ENCODE measurements at regions of chr1 and their contacts with region 1.

Region 1: GRCh38 chr1:11645670-11646265 is 8.5 kb downstream of the FBXO2 start:
- DNase-seq: peak; percentile 64
- H3K4me3 ChIP-seq: no peak overlapping the region
- H3K27ac ChIP-seq: no peak overlapping the region
- H3K4me1 ChIP-seq: no peaks in the 10 kb centered on the region
- H3K27me3 ChIP-seq: no peaks in the 10 kb centered on the region
- CTCF ChIP-seq: peak; percentile 72 to 84
- POLR2A ChIP-seq: no peak

Region 2: DNA sequence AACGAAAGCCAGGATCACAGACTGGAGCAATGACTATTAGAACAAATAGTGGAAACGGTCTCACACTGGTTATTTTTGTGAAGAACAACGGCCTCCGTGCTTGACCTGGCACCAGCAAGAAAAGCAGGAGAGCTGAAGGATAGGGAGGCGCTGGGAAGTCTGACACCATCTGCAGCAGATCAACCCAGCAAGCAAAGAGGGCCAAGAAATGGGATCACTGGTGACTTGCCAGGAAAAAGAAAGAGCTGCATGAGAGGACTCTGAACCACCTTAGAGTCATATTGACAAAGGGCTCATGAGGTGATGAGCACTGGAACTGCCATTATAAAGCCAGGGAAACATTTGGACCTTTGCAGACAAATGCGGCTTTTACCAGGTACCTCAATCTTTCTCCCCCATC is 408.4 kb before region 1 on chr1:
- CTCF ChIA-PET with region 1: interaction called, 128 read pairs
- POLR2A ChIA-PET with region 1: no interaction called
- dilution Hi-C with region 1: no loop called
- intact Hi-C with region 1: loop called (anchors 1 kb)
- DNase-seq: no peak
- H3K4me3 ChIP-seq: no peak overlapping the region
- H3K27ac ChIP-seq: peak overlapping the region; percentile 66
- H3K4me1 ChIP-seq: peaks cover 14% of the 10 kb centered on the region
- H3K27me3 ChIP-seq: no peaks in the 10 kb centered on the region
- CTCF ChIP-seq: no peak
- POLR2A ChIP-seq: no peak

Region 3: DNA sequence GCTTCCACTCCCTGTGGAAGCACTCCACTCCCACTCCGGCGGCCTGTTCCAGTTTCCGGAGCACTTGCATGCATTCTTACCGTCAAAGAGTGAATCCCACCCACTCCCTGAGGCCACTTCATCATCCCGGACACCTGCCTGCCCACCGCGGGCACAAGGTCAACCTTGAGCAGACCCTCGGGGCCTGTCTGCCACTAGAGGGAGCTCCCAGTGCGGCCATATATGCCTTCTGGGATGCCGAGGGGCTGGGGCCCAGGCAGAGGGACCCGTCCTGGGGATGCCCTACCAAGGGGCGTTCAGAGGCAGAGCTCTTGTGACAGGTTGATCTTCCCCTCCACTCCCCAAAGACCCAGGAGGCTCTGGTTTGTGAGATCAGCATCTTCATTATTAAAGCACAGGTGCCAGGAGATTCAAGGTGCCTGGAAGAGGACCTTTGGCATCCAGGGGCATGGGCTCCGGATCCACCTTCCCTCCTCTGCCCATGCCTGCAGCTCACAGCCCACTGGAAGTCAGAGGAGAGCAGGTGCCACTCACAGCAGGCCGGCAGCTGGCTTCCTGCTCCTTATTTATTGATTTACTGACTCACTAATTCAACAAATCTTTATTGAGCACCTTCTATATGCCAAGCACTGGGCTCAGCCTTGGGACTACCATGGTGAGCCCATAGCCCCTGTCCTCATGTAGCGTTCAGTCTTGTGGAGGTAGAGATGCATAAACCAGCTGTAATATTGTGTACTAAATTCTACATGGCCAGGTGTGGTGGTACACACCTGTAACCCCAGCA is 325.4 kb before region 1 on chr1:
- CTCF ChIA-PET with region 1: interaction called, 10 read pairs
- POLR2A ChIA-PET with region 1: no interaction called
- dilution Hi-C with region 1: no loop called
- intact Hi-C with region 1: loop called (anchors 1 kb)
- DNase-seq: no peak
- H3K4me3 ChIP-seq: no peak overlapping the region
- H3K27ac ChIP-seq: no peak overlapping the region
- H3K4me1 ChIP-seq: no peaks in the 10 kb centered on the region
- H3K27me3 ChIP-seq: peaks cover 0 to 2% of the 10 kb centered on the region in 2 experiments
- CTCF ChIP-seq: peak; percentile 51 to 74
- POLR2A ChIP-seq: no peak

Region 4: DNA sequence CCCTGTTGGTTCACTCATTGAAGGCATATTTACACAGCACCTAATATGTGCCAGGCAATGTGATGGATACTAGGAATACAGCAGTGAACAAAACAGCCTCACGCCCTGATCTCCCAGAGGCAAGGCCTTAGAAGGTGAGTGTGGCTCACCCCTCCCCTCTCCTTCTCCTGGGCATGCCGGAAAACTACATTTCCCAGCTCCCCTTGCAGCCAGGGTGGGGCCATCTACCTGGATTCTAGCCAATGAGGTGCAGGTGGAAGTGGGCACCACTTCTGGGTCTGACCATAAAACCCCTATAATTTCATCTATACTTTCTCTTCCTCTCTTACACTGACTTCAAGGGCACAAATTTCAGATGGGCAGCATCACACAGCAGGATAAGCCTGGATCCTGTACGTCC is 55.4 kb before region 1 on chr1:
- CTCF ChIA-PET with region 1: no interaction called
- POLR2A ChIA-PET with region 1: no interaction called
- dilution Hi-C with region 1: no loop called
- intact Hi-C with region 1: no loop called
- DNase-seq: no peak
- H3K4me3 ChIP-seq: no peak overlapping the region
- H3K27ac ChIP-seq: no peak overlapping the region
- H3K4me1 ChIP-seq: no peaks in the 10 kb centered on the region
- H3K27me3 ChIP-seq: peaks cover 0 to 4% of the 10 kb centered on the region in 2 experiments
- CTCF ChIP-seq: no peak
- POLR2A ChIP-seq: no peak

Region 5: DNA sequence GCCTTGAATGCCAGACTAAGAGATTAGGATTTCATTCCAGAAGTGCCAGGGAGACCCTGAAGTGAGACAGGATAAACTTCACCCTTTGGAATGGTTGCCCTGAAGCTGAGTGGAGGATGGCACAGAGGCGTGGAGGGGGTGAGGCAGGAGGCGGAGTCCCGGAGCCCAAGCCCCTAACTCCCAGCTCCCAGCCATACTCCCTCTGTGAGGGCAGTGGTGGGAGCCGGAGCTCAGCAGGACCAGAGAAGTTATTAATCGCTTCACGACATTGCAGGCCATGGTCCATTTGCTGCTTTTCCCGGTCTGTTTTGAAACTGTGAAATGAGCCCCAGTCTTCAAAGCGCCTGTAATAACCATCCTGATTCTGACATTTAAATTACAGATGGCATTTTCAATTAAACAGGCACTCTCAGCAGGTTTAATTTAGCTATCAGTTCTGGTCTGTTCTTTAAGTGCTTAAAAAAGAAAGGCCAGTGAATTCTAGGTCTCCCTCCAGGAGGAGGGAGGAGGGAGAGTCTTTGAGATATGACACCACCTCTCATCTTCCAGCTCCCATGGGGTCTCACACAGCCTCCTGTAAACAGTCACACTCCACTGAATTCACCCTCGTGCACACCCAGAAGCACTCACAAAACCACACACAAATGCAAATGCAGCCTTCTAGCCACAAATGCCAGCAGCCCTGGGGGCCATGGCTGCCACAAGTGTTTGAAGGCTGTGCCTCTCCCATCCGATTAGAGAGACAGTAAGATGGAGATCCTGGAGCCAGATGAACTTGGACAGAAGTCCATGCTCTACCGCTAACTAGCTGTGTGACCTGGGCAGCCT is 11.2 kb before region 1 on chr1:
- CTCF ChIA-PET with region 1: interaction called, 16 read pairs
- POLR2A ChIA-PET with region 1: no interaction called
- dilution Hi-C with region 1: no loop called
- intact Hi-C with region 1: no loop called
- DNase-seq: no peak
- H3K4me3 ChIP-seq: no peak overlapping the region
- H3K27ac ChIP-seq: no peak overlapping the region
- H3K4me1 ChIP-seq: no peaks in the 10 kb centered on the region
- H3K27me3 ChIP-seq: no peaks in the 10 kb centered on the region
- CTCF ChIP-seq: no peak
- POLR2A ChIP-seq: no peak

Region 6: DNA sequence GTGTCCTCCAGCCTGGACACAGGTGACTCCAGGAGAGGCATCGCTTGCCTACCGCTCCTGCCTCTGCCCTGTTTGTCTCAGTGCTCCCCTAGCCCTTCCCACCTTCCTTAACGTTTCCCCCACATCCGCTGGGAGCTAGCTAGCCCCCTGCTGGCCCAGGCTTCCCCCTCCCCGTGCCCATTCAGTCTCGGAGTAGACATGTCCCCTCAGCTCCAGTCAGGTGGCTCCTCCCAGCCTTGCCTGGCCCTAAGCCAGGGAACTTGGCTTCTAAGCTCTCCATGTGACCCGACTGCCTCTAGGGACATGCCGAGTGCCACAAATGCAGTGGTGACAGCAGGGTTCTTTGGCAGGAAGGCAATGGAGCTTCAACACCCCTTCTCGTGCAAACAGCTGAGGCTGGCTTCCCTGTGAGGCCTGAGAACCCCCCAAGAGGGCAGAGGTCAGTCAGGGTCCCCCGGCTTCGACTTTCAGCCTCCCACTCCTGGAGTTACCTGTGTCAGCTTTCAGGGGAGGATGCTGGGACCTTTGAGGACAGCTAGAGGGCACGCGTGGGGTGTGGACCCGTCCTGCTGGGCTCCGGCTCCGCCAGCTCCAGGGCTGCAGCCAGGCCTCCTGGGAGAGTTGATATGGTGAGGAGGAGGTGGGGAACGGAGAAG is 62.0 kb after region 1 on chr1:
- CTCF ChIA-PET with region 1: interaction called, 42 read pairs
- POLR2A ChIA-PET with region 1: interaction called, 3 read pairs
- dilution Hi-C with region 1: no loop called
- intact Hi-C with region 1: loop called (anchors 1 kb)
- DNase-seq: no peak
- H3K4me3 ChIP-seq: no peak overlapping the region
- H3K27ac ChIP-seq: no peak overlapping the region
- H3K4me1 ChIP-seq: no peaks in the 10 kb centered on the region
- H3K27me3 ChIP-seq: peaks cover 4 to 16% of the 10 kb centered on the region in 2 experiments
- CTCF ChIP-seq: no peak
- POLR2A ChIP-seq: no peak

Region 7: DNA sequence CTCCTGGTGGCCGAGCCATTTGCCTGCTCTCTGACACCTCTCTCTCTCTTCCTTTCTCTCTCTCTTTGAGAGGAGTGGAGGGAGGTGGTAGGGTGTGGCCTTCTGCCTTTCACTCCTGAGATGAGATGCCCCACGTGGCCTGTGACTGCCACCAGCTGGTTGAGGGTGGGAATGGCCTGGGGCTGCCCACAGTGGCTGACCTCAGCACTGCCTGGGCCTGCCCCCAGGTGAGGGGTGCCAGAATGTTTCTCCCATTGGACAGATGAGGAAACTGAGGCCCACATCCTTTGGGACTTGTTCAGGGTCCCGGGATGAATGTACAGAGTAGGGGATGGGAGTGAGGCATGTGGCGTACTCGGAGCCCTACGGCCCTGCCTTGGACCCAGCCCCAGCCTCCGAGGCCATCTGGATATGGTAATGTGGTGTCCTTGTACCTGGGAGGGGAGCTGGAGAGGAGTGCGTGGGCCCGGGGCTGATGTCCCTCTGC is 103.5 kb after region 1 on chr1:
- CTCF ChIA-PET with region 1: interaction called, 4 read pairs
- POLR2A ChIA-PET with region 1: no interaction called
- dilution Hi-C with region 1: no loop called
- intact Hi-C with region 1: loop called (anchors 1 kb)
- DNase-seq: peak; percentile 17
- H3K4me3 ChIP-seq: no peak overlapping the region
- H3K27ac ChIP-seq: no peak overlapping the region
- H3K4me1 ChIP-seq: no peaks in the 10 kb centered on the region
- H3K27me3 ChIP-seq: no peaks in the 10 kb centered on the region
- CTCF ChIP-seq: peak; percentile 52 to 56
- POLR2A ChIP-seq: no peak

Region 8: DNA sequence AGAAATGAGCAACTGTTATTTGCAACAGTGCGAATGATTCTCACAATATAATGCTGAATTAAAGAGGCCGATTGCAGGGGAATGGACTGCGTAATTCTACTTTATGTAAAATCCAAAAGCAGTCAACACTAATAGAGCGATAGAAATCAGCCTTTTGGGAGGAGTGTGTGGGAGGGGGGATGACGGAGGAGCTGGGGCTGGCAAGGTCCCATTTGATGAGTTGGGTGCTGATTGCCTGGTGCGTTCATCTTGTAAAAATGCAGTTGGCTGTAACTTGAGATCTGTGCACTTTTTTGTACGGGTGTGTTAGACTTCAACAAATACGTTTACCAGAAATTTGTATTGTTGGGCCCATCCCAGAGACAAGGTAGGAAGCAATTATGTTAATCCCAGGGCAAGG is 438.0 kb after region 1 on chr1:
- CTCF ChIA-PET with region 1: no interaction called
- POLR2A ChIA-PET with region 1: no interaction called
- dilution Hi-C with region 1: no loop called
- intact Hi-C with region 1: no loop called
- DNase-seq: no peak
- H3K4me3 ChIP-seq: no peak overlapping the region
- H3K27ac ChIP-seq: no peak overlapping the region
- H3K4me1 ChIP-seq: no peaks in the 10 kb centered on the region
- H3K27me3 ChIP-seq: peaks cover 0 to 2% of the 10 kb centered on the region in 2 experiments
- CTCF ChIP-seq: no peak
- POLR2A ChIP-seq: no peak

Region 9: DNA sequence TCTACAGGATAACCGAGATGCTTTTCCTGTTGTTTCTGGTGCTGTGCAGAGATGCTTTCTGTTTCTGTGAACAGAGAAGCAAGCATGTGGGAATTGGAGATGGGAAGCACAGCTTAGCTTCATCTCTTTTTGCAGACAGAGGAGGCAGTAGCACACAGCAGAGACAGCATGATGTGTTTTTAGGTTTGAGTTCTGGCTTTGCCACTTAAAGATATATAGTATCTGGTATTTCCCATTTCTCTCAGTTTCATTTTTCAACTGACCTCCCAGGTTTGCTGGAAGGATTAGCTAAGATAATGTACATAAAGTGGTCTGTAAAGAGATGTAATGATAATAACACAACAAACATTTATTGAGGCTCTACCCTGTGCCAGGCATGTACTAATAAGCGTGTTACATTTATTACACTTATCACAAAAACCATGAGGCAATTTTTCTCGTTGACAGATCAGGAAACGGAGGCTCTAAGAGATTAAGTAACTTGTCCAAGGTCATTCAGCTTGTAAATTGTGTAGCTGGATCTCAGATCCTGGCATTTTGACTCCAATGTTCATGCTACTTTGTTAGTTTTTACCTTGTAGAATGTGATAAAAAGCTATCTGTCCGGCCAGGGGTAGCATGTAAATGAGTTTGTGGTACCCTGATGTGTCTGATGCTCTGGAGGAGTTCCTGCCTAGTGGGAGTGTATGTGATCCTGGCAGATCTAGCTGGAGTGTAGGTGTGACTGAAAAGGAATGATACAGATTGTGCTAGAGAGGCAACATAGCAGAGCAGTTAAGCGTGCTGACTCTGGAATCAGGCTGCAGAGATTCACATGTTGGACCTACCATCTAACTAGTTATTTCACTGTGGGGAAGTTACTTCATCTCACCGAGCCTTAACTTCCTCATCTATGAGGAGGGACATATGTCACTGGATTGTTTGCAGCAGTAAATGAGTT is 730.6 kb after region 1 on chr1:
- CTCF ChIA-PET with region 1: no interaction called
- POLR2A ChIA-PET with region 1: no interaction called
- dilution Hi-C with region 1: no loop called
- intact Hi-C with region 1: no loop called
- DNase-seq: peak; percentile 85
- H3K4me3 ChIP-seq: no peak overlapping the region
- H3K27ac ChIP-seq: no peak overlapping the region
- H3K4me1 ChIP-seq: no peaks in the 10 kb centered on the region
- H3K27me3 ChIP-seq: no peaks in the 10 kb centered on the region
- CTCF ChIP-seq: peak in 1 of 2 donors; percentile 8
- POLR2A ChIP-seq: no peak

Measured in endothelial cell of umbilical vein (primary cell).